ENCODE measurements at regions of chr12 and their contacts with region 1.

Region 1: DNA sequence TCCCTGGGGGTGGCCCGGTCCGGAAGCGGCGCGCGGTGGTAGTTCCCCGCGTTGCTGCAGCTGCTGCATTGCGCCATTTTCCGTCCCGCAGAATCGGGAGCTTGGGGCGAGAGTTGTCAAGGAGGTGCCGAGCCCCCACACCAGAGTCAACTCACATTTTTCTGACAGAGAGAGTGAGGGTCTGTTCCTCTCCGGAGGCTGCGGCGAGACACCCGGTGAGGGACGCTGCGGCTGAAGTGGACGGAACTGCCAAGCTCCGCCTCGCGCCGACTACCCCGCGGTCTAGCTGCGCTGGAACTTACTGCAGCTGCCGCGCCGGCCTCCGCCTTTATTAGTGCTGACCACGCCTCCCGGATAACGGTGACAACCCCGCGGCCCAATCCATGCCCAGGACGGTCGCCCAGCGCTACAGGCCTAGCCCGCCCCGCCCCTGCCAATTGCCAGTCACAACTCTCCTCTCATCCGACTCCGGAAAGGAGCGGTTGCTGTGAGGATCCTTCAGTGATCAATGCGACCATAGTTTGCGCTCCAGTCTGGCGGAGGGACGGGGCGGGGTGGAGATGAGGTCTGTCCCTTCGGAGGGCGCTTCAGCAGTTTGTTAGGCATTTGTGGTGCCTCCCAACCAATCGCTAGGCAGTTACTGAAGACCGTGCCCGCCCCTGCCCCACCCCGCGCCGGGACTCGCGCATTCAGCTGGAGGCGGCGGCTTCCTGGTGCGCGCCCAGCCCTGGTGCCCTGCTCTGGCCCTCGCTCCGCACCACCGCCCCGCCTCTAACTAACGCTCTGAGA is at the start of gene VAMP1:
- DNase-seq: peak; percentile 99
- H3K4me3 Mint-ChIP-seq: peak within 1 kb of the TSS; percentile 89
- H3K27ac Mint-ChIP-seq: peak within 1 kb of the TSS; percentile 88
- H3K4me1 Mint-ChIP-seq: peaks cover 52% of the 10 kb centered on the region
- H3K27me3 Mint-ChIP-seq: peaks cover 8% of the 10 kb centered on the region
- total RNA-seq, gene VAMP1: 45.1 to 50.9 TPM

Region 2: DNA sequence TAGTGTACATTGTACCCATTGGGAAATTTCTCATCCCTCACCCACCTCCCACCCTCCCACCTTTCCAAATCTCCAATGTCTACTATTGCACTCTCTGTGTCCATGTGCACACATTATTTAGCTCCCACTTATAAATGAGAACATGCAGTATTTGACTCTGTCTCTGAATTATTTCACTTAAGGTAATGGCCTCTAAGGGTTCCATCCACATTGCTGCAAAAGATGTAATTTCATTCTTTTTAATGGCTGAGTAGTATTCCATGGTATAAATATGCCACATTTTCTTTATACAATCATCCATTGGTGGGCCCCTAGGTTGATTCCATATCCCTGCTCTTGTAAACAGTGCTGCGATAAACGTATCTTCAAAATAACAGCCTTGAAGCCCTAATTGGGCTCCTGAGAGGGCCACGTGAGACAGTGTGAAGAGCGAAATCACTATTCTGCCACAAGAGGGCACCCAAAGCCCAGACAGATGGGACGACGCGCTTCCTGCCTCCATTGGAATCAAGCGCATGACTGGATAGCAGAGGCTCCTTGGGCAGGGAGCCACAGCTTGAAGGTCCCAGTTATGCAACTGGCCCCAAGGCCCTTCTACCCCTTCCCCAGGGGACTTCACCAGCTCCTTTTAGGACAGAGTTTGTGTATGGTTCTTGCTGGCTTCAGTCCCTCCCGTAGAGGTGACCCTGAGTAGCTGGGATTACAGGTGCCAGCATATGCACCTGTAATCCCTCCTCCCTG is 47.1 kb before region 1 on chr12:
- CTCF ChIA-PET with region 1: interaction called, 95 read pairs
- POLR2A ChIA-PET with region 1: interaction called, 58 read pairs
- DNase-seq: peak; percentile 85
- H3K4me3 Mint-ChIP-seq: no peak overlapping the region
- H3K27ac Mint-ChIP-seq: peak overlapping the region; percentile 54
- H3K4me1 Mint-ChIP-seq: peaks cover 45% of the 10 kb centered on the region
- H3K27me3 Mint-ChIP-seq: no peaks in the 10 kb centered on the region

Region 3: DNA sequence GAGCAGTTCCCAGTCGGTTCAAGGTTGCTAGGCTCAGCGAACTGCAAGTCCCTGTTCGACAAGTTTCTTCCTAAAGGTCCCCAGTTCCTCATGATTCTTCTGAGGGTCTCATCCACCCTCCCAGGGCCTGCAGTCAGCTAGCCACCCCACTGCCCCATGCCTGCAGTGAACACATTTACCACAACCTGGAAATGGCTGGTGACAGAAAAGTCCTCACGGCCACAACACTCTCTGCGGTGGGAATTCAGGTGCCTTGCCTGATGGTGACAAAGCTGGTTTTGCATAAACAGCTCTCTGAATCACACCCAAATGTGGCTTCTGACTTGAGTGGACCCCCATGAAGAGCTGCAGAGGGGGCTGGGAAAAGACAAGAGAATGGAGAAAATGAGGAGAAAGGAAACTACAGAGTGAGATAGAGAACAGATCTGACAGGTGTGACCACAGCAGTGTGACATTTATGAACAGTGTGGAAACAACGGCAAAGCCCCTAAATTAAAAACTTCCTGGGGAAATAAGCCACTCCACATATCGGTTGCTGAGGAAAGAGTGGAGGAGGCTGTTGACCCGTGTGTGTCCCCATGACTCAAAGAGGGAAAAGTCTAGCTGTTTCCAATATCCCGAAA is 27.1 kb before region 1 on chr12:
- CTCF ChIA-PET with region 1: interaction called, 19 read pairs
- POLR2A ChIA-PET with region 1: interaction called, 298 read pairs
- DNase-seq: no peak
- H3K4me3 Mint-ChIP-seq: peak overlapping the region; percentile 38
- H3K27ac Mint-ChIP-seq: peak overlapping the region; percentile 71
- H3K4me1 Mint-ChIP-seq: peaks cover 54% of the 10 kb centered on the region
- H3K27me3 Mint-ChIP-seq: no peaks in the 10 kb centered on the region

Region 4: GRCh38 chr12:6488240-6488639 is 17.7 kb after region 1 on chr12:
- CTCF ChIA-PET with region 1: interaction called, 12 read pairs
- POLR2A ChIA-PET with region 1: interaction called, 163 read pairs
- DNase-seq: no peak
- H3K4me3 Mint-ChIP-seq: no peak overlapping the region
- H3K27ac Mint-ChIP-seq: no peak overlapping the region
- H3K4me1 Mint-ChIP-seq: peaks cover 14% of the 10 kb centered on the region
- H3K27me3 Mint-ChIP-seq: peaks cover 4% of the 10 kb centered on the region

Region 5: DNA sequence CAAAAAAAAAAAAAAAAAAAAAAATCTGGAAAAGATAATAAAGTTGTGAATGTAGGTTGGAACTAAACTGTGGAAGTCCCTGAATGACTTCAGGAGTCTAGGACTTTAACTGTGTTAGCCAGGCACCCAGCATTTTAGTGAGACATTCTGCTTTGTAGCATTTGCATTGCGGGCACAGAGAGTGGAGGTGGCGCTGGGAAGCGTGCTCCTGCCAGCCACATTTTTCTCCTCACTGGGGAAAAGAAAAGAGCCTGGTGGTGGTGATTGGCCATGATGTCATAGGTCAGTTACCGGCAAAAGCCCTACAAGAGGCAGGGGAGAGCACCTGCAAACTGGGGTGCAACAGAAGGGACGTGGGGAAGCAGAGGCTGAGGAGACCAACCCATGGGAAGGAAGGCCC is 54.1 kb after region 1 on chr12:
- CTCF ChIA-PET with region 1: no interaction called
- POLR2A ChIA-PET with region 1: no interaction called
- DNase-seq: no peak
- H3K4me3 Mint-ChIP-seq: no peak overlapping the region
- H3K27ac Mint-ChIP-seq: no peak overlapping the region
- H3K4me1 Mint-ChIP-seq: no peaks in the 10 kb centered on the region
- H3K27me3 Mint-ChIP-seq: no peaks in the 10 kb centered on the region

Region 6: GRCh38 chr12:6540181-6540877 is 69.8 kb after region 1 on chr12:
- CTCF ChIA-PET with region 1: interaction called, 11 read pairs
- POLR2A ChIA-PET with region 1: interaction called, 88 read pairs
- DNase-seq: peak; percentile 70
- H3K4me3 Mint-ChIP-seq: peak overlapping the region; percentile 51
- H3K27ac Mint-ChIP-seq: peak overlapping the region; percentile 88
- H3K4me1 Mint-ChIP-seq: peaks cover 66% of the 10 kb centered on the region
- H3K27me3 Mint-ChIP-seq: no peaks in the 10 kb centered on the region

Region 7: GRCh38 chr12:6950811-6951540 is 480.4 kb after region 1 on chr12 and contains the start of gene PTPN6:
- CTCF ChIA-PET with region 1: no interaction called
- POLR2A ChIA-PET with region 1: no interaction called
- DNase-seq: peak; percentile 70
- H3K4me3 Mint-ChIP-seq: peak within 1 kb of the TSS; percentile 94
- H3K27ac Mint-ChIP-seq: peak within 1 kb of the TSS; percentile 99
- H3K4me1 Mint-ChIP-seq: peaks cover 78% of the 10 kb centered on the region
- H3K27me3 Mint-ChIP-seq: no peaks in the 10 kb centered on the region
- total RNA-seq, gene PTPN6: 295 to 299 TPM